RWPE1 (cell line): ENCODE measurements at regions of chr16 and their contacts with region 1.

Region 1: DNA sequence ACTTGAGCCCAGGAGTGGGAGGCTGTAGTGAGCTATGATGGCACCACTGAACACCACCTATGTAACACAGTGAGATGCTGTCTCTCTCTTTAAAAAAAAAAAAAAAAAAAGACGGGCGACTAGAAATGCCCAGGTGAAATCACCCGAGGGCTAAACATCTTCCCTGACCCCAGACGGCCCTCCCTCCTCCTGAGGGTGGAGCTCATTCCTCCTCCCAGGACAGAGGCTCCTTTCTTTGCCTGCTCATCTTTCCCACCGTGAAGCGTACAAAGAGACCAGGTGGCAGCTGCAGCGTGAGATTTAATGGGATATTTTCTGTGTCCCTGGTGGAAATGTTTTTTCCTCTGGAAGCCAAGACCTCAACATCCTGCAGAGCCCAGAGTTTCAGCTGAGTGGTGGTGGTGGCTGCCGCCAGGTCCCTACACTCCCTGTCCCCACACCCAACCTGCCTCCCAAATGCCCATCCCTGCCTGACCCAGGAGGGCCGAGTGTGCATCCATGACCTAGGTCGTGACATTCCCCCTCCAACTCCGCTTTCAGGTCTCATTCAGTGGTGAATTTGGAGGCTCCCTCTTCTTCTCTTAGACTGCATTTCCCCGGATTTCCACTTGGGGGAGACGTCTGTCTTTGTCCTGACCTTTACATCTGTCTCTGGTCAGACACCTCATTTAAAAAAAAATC is 14.4 kb upstream of the GPRC5B start:
- DNase-seq: peak; percentile 59
- H3K27ac ChIP-seq: no peak overlapping the region
- CTCF ChIP-seq: peak; percentile 85

Region 2: DNA sequence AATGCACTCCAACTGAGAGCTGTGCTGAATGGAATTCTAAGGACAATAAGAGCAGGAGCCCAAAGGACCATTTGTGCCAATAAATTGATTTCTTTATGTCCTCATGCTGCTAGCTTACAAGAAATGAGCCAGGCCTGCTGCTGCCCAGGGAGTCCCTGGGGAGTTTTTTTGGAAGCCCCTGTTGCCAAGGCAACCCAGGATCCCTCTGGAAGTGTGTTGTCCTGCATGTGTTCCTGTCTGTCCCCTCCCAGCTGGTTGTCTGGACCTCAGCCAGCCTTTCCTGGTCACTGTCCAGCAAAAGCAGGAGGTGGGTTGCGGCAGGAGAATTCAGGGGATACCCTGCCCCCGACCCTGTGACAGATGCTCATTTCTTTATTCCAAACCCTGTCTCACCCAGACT is 36.6 kb after region 1 on chr16:
- CTCF ChIA-PET with region 1: no interaction called
- POLR2A ChIA-PET with region 1: no interaction called
- DNase-seq: no peak
- H3K27ac ChIP-seq: no peak overlapping the region
- CTCF ChIP-seq: no peak

Region 3: DNA sequence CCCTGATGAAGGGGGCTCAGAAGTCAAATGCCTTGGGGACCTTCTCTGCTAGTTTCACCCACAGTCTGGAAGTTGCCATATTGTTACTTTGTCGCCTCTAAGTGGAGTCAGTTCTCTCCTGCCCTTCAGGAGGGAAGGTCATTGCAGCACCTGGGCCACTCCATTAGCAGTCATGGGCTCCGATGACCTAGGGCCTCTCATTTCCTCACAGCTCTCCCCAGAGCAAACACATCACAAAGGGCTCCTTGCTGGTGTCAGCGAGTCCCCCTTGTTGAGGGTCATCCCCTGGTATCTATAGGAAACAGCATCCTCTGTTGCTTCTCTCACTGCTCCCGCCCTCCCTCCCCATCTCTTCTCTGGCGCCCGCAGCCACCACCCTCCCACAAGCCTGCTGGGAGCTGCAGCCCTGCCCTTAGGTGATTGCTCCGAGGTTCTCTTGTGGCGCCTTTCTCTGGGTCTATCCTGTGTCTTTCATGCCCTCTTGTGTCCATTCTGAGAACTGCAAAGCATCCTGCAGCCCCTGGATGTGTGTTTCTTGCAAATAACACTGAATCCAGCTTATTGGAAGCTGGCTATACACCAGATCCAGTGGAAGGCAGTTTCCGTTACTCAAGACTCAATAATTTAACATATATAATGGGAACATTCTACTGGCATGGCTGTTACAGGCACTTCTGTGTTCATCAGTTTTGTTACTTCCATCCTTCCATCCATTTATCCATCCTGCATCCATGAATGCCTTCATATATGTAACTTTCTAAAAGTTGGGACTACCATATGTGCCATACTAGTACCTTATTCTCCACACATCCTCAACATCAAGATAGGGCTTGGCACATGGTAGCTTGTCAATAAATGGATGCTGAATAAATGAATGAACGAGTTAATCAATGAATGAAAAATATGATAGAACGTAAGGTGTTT is 484.3 kb after region 1 on chr16:
- CTCF ChIA-PET with region 1: interaction called, 34 read pairs
- POLR2A ChIA-PET with region 1: no interaction called
- DNase-seq: peak; percentile 63
- H3K27ac ChIP-seq: no peak overlapping the region
- CTCF ChIP-seq: peak; percentile 82